HEK293T (cell line): ENCODE measurements at regions of chr1 and their contacts with region 1.

Region 1: DNA sequence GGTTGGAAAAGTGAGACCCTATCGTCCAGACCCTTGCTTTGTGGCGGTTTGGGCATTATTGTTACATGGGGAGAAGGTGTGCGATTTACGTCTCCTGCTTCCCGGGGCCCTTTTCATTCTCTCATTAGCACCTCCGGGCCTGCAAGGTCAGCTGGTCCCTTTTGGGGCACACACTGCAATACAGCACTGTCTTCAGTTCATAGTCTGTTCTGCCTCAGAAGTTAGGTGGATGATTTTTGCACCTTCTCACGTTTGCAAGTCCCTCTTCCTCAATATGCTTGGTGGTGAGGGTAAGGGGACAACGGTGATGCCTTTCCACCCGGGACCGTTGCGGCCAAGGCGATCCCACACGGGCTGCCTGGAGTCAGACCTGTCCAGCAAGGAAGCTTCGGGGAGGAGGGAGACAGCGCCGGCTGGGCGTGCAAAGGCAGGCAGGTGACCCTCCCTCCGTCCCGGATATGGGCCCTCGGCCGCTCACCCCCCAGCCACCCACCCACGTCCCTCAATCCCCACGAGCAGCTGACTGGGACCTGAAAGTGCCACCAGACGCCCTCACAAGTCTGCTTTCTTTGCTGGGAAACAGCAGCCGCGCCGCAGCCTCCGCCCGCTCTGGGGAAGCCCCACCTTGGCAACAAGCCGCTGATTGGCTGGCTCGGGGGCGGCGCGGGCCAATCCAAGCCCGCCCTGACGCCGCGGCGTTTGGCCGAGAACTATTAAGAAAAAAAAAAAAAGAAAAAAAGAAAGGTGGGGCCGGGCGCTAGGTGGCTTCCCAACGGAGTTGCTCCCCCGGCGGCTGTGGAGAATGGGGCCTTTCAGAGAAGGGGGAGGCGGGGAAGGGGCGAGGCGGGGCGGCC is 21.7 kb downstream of the BTG2 start:
- DNase-seq: peak; percentile 98

Region 2: DNA sequence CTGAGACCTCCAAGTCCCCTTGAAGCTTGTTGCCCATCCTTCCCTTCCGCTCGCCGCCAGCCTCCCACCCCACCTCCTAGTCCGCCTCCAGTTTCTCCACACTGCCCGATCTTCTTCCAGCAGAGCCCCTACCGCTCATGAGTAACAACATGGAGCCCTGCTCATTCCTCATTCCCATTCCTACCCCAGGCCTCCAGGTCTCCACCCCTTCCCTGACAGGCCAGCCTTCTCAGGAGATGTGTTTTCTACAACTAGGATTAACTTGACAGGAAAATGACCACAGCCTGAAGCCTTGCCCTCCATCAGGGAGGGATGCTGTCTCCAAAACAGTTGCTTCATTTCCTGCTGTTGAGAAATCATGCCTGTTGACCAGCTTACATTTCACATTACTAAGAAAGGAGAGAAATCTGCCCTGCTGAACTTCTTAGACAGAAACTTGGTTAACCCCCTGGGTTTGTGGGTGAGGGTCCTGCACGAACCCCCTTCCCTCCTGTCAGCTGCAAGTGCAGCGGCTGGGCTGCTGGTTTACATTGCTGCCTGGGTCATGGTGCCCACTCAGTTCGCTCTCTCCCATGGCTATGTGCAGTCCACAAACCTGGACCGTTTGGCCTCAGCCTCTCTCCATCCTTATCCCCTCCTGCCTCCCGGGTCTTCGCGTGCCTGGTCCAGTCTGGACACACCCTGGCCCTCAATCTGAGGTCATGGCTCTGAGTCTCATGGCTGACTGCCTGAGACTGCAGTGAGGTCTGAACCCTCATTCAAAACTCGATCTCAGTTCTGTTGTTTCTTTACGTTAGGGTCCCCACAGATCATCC is 124.4 kb before region 1 on chr1:
- CTCF ChIA-PET with region 1: no interaction called
- POLR2A ChIA-PET with region 1: no interaction called
- DNase-seq: no peak

Region 3: DNA sequence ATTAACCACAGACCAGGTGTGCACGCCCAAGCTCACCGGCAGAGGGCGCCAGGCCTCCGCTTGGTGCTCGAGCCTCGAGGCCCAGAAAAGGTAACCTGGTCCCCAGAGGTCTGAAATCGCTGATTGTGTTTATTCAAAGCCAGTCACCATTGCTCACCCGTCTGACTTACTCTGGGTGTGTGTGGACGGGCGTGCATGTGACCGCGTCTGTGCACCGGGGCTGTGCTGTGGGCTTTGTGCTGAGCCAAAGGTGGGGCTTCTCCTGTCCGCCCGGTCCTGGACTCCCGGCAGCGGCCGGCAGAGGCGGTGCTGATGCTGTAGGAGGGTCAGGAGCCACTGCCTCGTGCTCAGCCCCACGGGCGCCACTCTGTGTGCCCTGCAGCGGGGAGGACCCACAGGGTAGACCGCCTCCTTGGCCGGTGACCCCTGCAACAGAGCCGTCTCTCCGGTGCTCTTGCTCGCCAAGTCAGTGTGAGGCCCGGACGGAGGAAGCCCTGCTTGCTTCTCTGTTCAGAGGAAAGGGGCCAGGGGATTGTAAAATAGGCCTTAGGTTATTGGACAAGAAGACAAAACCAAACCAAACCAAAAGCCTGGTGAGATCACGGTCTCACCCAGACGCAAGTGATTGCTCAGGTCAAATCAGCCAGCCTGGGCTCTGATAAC is 53.7 kb before region 1 on chr1:
- CTCF ChIA-PET with region 1: interaction called, 19 read pairs
- POLR2A ChIA-PET with region 1: interaction called, 9 read pairs
- DNase-seq: peak; percentile 83

Region 4: GRCh38 chr1:203290261-203291089 is 36.6 kb before region 1 on chr1:
- CTCF ChIA-PET with region 1: no interaction called
- POLR2A ChIA-PET with region 1: interaction called, 10 read pairs
- DNase-seq: peak; percentile 87

Region 5: GRCh38 chr1:203304919-203305808 is 21.9 kb before region 1 on chr1 and contains the start of gene BTG2:
- CTCF ChIA-PET with region 1: interaction called, 5 read pairs
- POLR2A ChIA-PET with region 1: interaction called, 71 read pairs
- DNase-seq: peak; percentile 98

Region 6: GRCh38 chr1:203351037-203352013 is 24.3 kb after region 1 on chr1 and contains the start of gene FMOD:
- CTCF ChIA-PET with region 1: no interaction called
- POLR2A ChIA-PET with region 1: no interaction called
- DNase-seq: peak; percentile 46